CD8-positive, alpha-beta T cell (primary cell): ENCODE measurements at regions of chr1 and their contacts with region 1.

Region 1: GRCh38 chr1:2044510-2045319 is 5.5 kb upstream of the PRKCZ start:
- DNase-seq: peak; percentile 68 to 89 (median 76)
- ATAC-seq: peak; percentile 94
- H3K4me3 ChIP-seq: peak overlapping the region; percentile 32 to 50
- H3K4me3 Mint-ChIP-seq: peak overlapping the region; percentile 65
- H3K27ac ChIP-seq: no peak overlapping the region
- H3K27ac Mint-ChIP-seq: no peak overlapping the region
- H3K4me1 ChIP-seq: peaks cover 19% of the 10 kb centered on the region
- H3K4me1 Mint-ChIP-seq: peaks cover 20% of the 10 kb centered on the region
- H3K27me3 ChIP-seq: peaks cover 0 to 5% of the 10 kb centered on the region in 2 experiments
- H3K27me3 Mint-ChIP-seq: no peaks in the 10 kb centered on the region
- CTCF ChIP-seq: peak; percentile 89

Region 2: GRCh38 chr1:1847061-1847850 is 197.5 kb before region 1 on chr1:
- CTCF ChIA-PET with region 1: no interaction called
- POLR2A ChIA-PET with region 1: no interaction called
- intact Hi-C with region 1: no loop called
- DNase-seq: no peak
- ATAC-seq: no peak
- H3K4me3 ChIP-seq: no peak overlapping the region
- H3K4me3 Mint-ChIP-seq: no peak overlapping the region
- H3K27ac ChIP-seq: no peak overlapping the region
- H3K27ac Mint-ChIP-seq: peak overlapping the region; percentile 29
- H3K4me1 ChIP-seq: peaks cover 24% of the 10 kb centered on the region
- H3K4me1 Mint-ChIP-seq: peaks cover 66% of the 10 kb centered on the region
- H3K27me3 ChIP-seq: no peaks in the 10 kb centered on the region
- H3K27me3 Mint-ChIP-seq: no peaks in the 10 kb centered on the region
- CTCF ChIP-seq: no peak

Region 3: DNA sequence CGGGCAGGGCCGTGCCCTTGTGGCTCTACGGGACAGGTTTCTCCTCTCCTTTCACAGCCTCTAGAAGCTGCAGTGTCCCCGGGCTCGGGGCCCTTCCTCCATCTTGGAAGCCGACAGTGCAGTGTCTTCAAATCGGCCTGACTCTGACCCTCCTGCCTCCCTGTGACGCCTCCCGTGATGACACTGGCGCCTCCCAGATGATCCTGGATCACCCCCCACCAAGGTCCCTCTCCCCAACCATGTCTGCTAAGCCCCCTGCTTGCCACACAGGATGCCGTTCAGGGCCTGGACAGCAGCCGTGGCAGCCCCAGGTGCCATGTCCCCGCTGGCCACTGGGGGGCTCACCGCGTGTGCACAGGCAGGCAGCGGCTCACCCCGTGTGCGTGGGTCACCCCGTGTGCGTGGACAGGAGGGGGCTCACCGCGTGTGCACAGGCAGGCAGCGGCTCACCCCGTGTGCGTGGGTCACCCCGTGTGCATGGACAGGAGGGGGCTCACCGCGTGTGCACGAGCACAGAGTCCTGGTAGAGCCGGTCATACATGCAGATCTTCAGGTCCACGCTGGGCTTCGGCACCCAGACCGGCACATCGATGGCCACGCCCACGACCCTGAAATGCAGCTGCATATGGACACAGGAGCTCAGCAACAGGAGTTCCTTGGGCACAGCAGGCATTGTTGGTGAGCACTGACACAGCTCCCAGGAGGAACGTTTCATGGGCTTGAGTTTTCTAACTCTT is 100.7 kb before region 1 on chr1:
- CTCF ChIA-PET with region 1: interaction called, 44 read pairs
- POLR2A ChIA-PET with region 1: interaction called, 3 read pairs
- intact Hi-C with region 1: loop called in 1 of 2 experiments (anchors 1 kb)
- DNase-seq: peak; percentile 38 to 75 (median 58)
- ATAC-seq: peak; percentile 99
- H3K4me3 ChIP-seq: no peak overlapping the region
- H3K4me3 Mint-ChIP-seq: no peak overlapping the region
- H3K27ac ChIP-seq: no peak overlapping the region
- H3K27ac Mint-ChIP-seq: no peak overlapping the region
- H3K4me1 ChIP-seq: peaks cover 5% of the 10 kb centered on the region
- H3K4me1 Mint-ChIP-seq: peaks cover 3% of the 10 kb centered on the region
- H3K27me3 ChIP-seq: no peaks in the 10 kb centered on the region
- H3K27me3 Mint-ChIP-seq: no peaks in the 10 kb centered on the region
- CTCF ChIP-seq: peak; percentile 83

Region 4: DNA sequence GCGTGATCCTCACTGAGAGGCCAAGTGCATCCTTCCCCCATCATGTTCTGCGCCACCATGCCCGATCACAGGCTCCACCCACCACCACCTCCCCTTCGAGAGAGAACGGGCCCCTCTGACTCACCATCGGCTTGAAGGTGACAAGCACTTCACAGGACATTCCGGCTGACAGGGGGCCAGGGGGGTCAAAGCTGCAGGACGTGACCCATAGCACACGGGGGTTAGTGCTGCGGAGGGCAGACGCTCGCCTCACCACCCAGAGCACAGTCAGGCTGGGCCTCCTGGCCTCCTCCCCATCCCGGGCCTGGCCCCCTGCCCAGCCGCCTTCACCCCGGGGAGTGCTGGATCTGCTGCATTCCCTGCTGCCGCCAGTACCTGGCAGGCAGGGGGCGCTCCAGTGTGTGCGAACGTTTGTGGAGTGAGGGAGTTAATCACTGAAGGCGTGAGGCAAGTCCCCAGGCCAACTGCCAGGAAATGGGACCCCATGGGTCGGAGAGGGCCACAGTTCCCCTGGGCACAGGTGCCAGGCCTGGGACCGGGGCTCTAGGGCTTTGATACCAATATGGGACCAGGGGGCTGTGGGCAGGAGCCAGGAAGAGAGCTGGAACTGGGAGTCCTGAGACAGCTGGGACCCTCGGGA is 84.8 kb before region 1 on chr1:
- CTCF ChIA-PET with region 1: interaction called, 19 read pairs
- POLR2A ChIA-PET with region 1: no interaction called
- intact Hi-C with region 1: loop called in 1 of 2 experiments (anchors 1 kb)
- DNase-seq: peak; percentile 22 to 73 (median 58)
- ATAC-seq: peak; percentile 52
- H3K4me3 ChIP-seq: no peak overlapping the region
- H3K4me3 Mint-ChIP-seq: no peak overlapping the region
- H3K27ac ChIP-seq: no peak overlapping the region
- H3K27ac Mint-ChIP-seq: no peak overlapping the region
- H3K4me1 ChIP-seq: no peaks in the 10 kb centered on the region
- H3K4me1 Mint-ChIP-seq: no peaks in the 10 kb centered on the region
- H3K27me3 ChIP-seq: no peaks in the 10 kb centered on the region
- H3K27me3 Mint-ChIP-seq: peaks cover 31% of the 10 kb centered on the region
- CTCF ChIP-seq: peak; percentile 53

Region 5: GRCh38 chr1:2019172-2019543 is 25.6 kb before region 1 on chr1 and contains the start of gene GABRD:
- CTCF ChIA-PET with region 1: interaction called, 4 read pairs
- POLR2A ChIA-PET with region 1: no interaction called
- intact Hi-C with region 1: loop called in 1 of 2 experiments (anchors 1 kb)
- DNase-seq: peak in 2 of 9 experiments; percentile 32 to 34
- ATAC-seq: peak; percentile 65
- H3K4me3 ChIP-seq: no peak within 1 kb of the TSS
- H3K4me3 Mint-ChIP-seq: peak within 1 kb of the TSS; percentile 82
- H3K27ac ChIP-seq: no peak within 1 kb of the TSS
- H3K27ac Mint-ChIP-seq: no peak within 1 kb of the TSS
- H3K4me1 ChIP-seq: peaks cover 5% of the 10 kb centered on the region
- H3K4me1 Mint-ChIP-seq: peaks cover 4% of the 10 kb centered on the region
- H3K27me3 ChIP-seq: peaks cover 13 to 15% of the 10 kb centered on the region in 2 experiments
- H3K27me3 Mint-ChIP-seq: peaks cover 62% of the 10 kb centered on the region
- CTCF ChIP-seq: no peak
- total RNA-seq, gene GABRD: 0.19 to 0.25 TPM

Region 6: DNA sequence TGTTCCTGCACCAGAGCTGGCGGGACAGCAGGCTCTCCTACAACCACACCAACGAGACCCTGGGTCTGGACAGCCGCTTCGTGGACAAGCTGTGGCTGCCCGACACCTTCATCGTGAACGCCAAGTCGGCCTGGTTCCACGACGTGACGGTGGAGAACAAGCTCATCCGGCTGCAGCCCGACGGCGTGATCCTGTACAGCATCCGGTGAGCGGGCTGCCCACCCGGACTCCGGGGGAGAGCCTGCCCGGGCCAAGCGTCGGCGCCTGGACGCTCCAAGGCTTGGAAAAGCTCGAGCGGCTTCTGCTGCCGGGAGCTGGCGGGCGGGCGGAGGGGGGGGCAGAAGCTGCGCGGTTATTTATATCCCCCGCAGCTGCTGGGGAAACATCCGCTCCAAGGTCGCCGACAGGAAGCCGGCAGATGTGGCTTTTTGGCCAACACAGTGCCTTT is 19.2 kb before region 1 on chr1:
- CTCF ChIA-PET with region 1: interaction called, 11 read pairs
- POLR2A ChIA-PET with region 1: no interaction called
- intact Hi-C with region 1: no loop called
- DNase-seq: peak in 3 of 9 experiments; percentile 26 to 62 (median 43)
- ATAC-seq: peak; percentile 40
- H3K4me3 ChIP-seq: peak overlapping the region; percentile 4 to 15
- H3K4me3 Mint-ChIP-seq: peak overlapping the region; percentile 5
- H3K27ac ChIP-seq: no peak overlapping the region
- H3K27ac Mint-ChIP-seq: no peak overlapping the region
- H3K4me1 ChIP-seq: peaks cover 8% of the 10 kb centered on the region
- H3K4me1 Mint-ChIP-seq: no peaks in the 10 kb centered on the region
- H3K27me3 ChIP-seq: peaks cover under 1 to 5% of the 10 kb centered on the region in 2 experiments
- H3K27me3 Mint-ChIP-seq: peaks cover 25% of the 10 kb centered on the region
- CTCF ChIP-seq: no peak